AG04449 (cell line): ENCODE measurements at regions of chr16 and their contacts with region 1.

Region 1: GRCh38 chr16:50024684-50025536 is at the start of gene CNEP1R1:
- DNase-seq: peak; percentile 77
- H3K4me3 ChIP-seq: peak within 1 kb of the TSS; percentile 86
- CTCF ChIP-seq: peak; percentile 100

Region 2: GRCh38 chr16:49904348-49905062 is 120.4 kb before region 1 on chr16:
- CTCF ChIA-PET with region 1: no interaction called
- POLR2A ChIA-PET with region 1: no interaction called
- DNase-seq: no peak
- H3K4me3 ChIP-seq: no peak overlapping the region
- CTCF ChIP-seq: no peak

Region 3: GRCh38 chr16:49918257-49918656 is 106.7 kb before region 1 on chr16:
- CTCF ChIA-PET with region 1: no interaction called
- POLR2A ChIA-PET with region 1: no interaction called
- DNase-seq: no peak
- H3K4me3 ChIP-seq: no peak overlapping the region
- CTCF ChIP-seq: no peak

Region 4: GRCh38 chr16:49952386-49952785 is 72.5 kb before region 1 on chr16:
- CTCF ChIA-PET with region 1: no interaction called
- POLR2A ChIA-PET with region 1: no interaction called
- DNase-seq: no peak
- H3K4me3 ChIP-seq: no peak overlapping the region
- CTCF ChIP-seq: no peak

Region 5: DNA sequence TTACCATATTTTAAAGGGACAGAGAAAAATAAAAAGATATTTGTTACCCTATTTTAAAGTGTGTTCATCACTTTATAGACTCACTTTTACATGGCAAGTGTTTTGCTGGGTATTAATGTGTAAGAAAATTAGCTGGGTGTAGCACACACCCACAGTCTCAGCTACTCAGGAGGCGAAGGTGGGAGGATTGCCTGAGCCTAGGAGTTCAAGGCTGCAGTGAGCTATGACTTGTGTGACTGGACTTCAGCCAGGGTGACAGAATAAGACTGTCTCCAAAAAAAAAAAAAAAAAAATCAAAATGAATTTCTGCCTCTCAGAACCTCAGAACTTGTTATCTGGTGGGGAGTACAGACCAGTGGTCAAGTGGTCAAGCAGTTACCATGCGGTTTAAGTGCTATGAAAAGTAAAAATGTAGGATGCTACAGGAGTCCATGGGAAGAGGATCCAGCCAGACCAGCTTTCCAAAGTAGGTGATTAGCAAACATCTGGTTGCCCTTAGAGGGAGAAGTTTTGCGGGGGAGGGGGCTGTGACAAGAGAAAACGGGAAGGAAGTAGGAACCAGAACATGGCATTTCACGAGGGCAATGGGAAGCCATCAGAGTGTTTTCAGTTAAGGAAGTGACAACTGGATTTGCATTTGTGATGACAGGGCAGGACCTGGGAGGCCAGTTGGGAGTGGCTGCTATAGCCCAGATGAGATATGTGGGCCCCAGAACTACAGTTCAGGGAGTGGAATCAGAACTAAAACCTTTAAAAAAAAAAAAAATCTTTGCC is 14.0 kb after region 1 on chr16:
- CTCF ChIA-PET with region 1: interaction called, 85 read pairs
- POLR2A ChIA-PET with region 1: no interaction called
- DNase-seq: no peak
- H3K4me3 ChIP-seq: no peak overlapping the region
- CTCF ChIP-seq: no peak

Region 6: DNA sequence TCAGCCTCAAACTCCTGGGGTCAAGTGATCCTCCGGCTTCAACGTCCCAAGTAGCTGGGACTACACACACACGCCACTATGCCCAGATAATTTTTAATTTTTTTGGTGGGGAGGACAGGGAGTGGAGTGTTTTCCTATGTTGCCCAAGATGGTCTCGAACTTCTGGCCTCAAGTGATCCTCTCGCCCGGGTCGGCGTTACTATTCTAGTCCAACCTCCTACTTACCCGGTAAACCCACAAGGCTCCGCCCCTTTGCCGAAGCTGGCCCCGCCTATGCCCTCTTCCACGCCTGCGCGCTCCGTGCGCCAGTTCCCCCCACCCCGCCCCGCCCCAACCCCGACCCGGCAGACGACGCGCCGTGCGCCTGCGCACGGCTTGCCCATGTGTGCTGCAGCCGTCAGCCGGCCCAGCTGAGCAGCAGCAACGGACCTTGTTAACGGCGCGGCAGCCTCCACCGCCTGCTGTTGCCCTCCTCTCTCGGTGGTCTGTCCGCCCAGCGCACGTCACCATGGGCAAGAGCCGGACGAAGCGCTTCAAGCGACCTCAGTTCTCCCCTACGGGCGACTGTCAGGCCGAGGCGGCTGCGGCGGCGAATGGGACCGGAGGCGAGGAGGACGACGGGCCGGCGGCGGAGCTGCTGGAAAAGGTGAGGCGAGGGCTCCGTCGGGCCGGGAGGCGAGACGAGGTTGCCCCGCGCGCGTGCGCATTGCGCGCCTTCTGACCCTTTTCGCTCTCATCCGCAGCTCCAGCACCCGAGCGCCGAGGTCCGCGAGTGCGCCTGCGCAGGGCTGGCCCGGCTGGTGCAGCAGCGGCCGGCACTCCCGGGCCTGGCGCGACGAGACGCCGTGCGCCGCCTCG is 40.9 kb after region 1 on chr16 and contains the start of gene HEATR3:
- CTCF ChIA-PET with region 1: interaction called, 34 read pairs
- POLR2A ChIA-PET with region 1: interaction called, 4 read pairs
- DNase-seq: peak; percentile 53
- H3K4me3 ChIP-seq: peak within 1 kb of the TSS; percentile 100
- CTCF ChIP-seq: no peak

Region 7: GRCh38 chr16:50096791-50097190 is 71.9 kb after region 1 on chr16:
- CTCF ChIA-PET with region 1: interaction called, 12 read pairs
- POLR2A ChIA-PET with region 1: no interaction called
- DNase-seq: peak; percentile 50
- H3K4me3 ChIP-seq: no peak overlapping the region
- CTCF ChIP-seq: no peak

Region 8: DNA sequence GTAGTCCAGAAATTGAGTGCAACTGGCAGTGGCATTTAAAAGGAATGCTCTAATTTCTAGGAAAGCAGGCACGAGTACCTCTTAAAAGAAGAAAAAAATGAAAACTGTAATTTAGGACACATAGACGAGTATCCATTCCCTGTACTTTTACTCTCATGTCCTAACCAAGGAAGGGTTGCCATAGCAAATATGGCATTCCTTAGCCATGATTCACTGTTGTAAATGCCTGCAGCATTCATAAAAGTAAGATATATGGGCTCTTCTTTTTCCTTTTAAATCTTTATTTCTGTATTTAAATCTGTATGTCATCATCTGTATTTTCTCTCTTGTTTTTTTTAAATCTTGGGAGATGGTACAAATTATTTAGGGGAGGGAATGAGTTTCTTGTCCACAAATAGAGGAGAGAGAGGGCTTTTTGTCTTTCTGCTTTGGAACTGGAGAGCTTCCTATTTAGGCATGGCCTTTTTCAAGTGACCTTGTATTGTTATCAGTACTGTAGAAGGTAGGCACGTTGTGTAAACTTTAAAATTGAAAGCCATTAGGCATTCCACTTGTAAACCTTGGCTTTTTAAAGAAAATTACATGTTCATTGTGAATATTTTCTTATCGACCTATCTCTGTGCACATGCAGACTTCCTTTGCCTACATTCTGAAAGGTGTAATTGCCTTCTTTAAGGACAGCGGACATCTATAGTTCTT is 178.2 kb after region 1 on chr16:
- CTCF ChIA-PET with region 1: interaction called, 249 read pairs
- POLR2A ChIA-PET with region 1: interaction called, 3 read pairs
- DNase-seq: peak; percentile 86
- H3K4me3 ChIP-seq: peak overlapping the region; percentile 9; the same call in 1 of the 2 replicates
- CTCF ChIP-seq: no peak

Region 9: GRCh38 chr16:50360033-50360778 is 335.3 kb after region 1 on chr16:
- CTCF ChIA-PET with region 1: interaction called, 67 read pairs
- POLR2A ChIA-PET with region 1: no interaction called
- DNase-seq: no peak
- H3K4me3 ChIP-seq: no peak overlapping the region
- CTCF ChIP-seq: no peak

Region 10: DNA sequence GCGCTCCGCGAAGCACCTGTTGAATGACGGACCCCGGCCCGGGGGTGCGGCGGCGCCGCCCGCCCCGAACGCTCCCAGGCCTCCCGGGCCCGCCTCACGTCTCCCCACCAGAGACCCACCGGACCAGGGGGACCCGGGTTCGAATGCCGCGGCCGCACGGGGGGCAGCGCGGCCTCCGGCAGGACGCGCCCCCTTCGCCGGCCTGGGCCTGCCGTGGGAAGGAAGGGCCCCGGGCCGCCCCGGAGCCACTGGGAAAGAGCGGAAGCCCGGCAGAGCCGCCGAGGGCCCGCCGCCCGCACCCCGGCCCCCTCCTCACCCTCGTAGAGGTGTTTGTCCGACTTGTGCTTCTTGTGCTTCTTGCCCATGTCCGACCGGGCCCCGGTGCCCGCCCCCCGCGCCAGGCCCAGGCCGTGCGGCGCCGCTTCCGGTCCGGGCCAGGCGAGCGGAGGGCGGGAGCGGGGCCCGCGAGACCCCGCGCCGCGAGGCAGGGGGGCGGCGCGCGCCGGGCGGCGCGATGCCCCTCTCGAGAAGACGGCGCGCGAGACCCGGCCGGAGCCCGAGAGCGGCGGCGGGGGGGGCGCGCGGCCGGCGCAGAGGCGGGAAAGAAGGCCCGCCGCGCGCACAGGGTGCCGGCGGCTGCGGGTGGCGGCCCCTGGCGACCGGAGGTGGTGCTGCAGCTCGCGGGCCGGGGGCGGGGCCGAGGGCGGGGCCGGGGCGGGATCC is 343.7 kb after region 1 on chr16 and contains the start of gene BRD7:
- CTCF ChIA-PET with region 1: interaction called, 17 read pairs
- POLR2A ChIA-PET with region 1: no interaction called
- DNase-seq: no peak
- H3K4me3 ChIP-seq: peak within 1 kb of the TSS; percentile 62
- CTCF ChIP-seq: peak; percentile 54